A673 (cell line): ENCODE measurements at regions of chr6 and their contacts with region 1.

Region 1: DNA sequence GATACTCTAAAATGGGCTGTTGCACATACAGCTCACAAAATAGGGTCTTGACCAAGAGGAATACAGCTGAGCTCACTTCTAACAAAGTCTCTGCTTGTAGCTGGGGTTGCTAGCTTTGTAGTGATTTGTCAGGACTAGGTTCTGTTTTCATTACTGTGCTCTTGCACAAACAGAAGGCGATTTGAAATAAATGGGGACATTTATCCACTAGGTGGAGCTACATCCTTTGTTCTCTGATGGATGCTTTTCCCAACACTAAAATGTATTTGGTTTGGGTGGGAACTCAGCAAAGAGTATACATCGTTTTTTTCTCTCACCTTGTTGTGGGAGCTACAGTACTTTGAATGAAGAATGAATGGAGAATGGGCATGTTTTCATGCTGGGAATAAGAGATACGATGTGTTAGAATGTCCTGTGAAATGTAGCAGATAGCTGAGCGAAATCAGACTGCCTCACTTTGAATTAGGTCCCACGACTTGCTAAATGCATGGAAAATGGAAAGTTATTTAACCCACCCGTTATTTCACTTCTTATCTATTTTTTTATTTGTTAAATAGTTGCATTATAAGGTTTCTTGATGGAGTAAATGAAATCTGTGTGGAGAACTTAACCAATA is 494.7 kb upstream of the MAP3K7 start:
- DNase-seq: peak; percentile 88
- H3K4me3 ChIP-seq: no peak overlapping the region
- H3K27ac ChIP-seq: peak overlapping the region; percentile 56
- H3K4me1 ChIP-seq: peaks cover 32% of the 10 kb centered on the region
- H3K27me3 ChIP-seq: no peaks in the 10 kb centered on the region
- CTCF ChIP-seq: peak; percentile 77

Region 2: GRCh38 chr6:90610751-90611542 is 470.6 kb before region 1 on chr6:
- CTCF ChIA-PET with region 1: no interaction called
- POLR2A ChIA-PET with region 1: no interaction called
- intact Hi-C with region 1: loop called (anchors 10 kb)
- DNase-seq: peak; percentile 56
- H3K4me3 ChIP-seq: peak overlapping the region; percentile 67
- H3K27ac ChIP-seq: no peak overlapping the region
- H3K4me1 ChIP-seq: peaks cover 10% of the 10 kb centered on the region
- H3K27me3 ChIP-seq: no peaks in the 10 kb centered on the region
- CTCF ChIP-seq: no peak

Region 3: DNA sequence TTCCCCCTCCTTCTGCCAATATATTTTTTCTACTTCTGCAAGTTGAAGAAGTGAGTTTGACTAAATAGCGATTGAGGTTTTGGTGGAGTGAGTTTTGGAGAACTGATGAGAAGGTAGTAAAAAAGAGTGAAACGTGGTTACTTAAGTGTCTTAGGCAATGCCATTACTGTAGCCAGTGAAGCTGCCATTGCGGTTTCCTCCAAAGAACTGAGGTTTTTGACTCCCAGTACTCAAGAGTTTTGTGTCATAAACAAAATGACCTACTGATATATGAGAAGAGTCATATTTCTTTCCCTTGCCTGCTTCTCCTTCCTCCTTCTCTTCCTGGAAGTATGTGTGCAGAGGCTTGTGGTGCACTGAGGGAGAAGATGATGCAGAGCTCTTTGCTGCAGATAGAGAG is 59.8 kb after region 1 on chr6:
- CTCF ChIA-PET with region 1: interaction called, 7 read pairs
- POLR2A ChIA-PET with region 1: no interaction called
- intact Hi-C with region 1: loop called (anchors 2 kb)
- DNase-seq: no peak
- H3K4me3 ChIP-seq: no peak overlapping the region
- H3K27ac ChIP-seq: peak overlapping the region; percentile 48
- H3K4me1 ChIP-seq: peaks cover 61% of the 10 kb centered on the region
- H3K27me3 ChIP-seq: no peaks in the 10 kb centered on the region
- CTCF ChIP-seq: no peak

Region 4: GRCh38 chr6:91276315-91276714 is 194.8 kb after region 1 on chr6:
- CTCF ChIA-PET with region 1: no interaction called
- POLR2A ChIA-PET with region 1: no interaction called
- intact Hi-C with region 1: loop called (anchors 5 kb)
- DNase-seq: peak; percentile 71
- H3K4me3 ChIP-seq: no peak overlapping the region
- H3K27ac ChIP-seq: peak overlapping the region; percentile 10
- H3K4me1 ChIP-seq: peaks cover 48% of the 10 kb centered on the region
- H3K27me3 ChIP-seq: no peaks in the 10 kb centered on the region
- CTCF ChIP-seq: peak; percentile 65

Region 5: GRCh38 chr6:91490672-91491301 is 409.2 kb after region 1 on chr6:
- CTCF ChIA-PET with region 1: no interaction called
- POLR2A ChIA-PET with region 1: interaction called, 3 read pairs
- intact Hi-C with region 1: loop called (anchors 10 kb)
- DNase-seq: peak; percentile 44
- H3K4me3 ChIP-seq: no peak overlapping the region
- H3K27ac ChIP-seq: peak overlapping the region; percentile 13
- H3K4me1 ChIP-seq: peaks cover 4% of the 10 kb centered on the region
- H3K27me3 ChIP-seq: no peaks in the 10 kb centered on the region
- CTCF ChIP-seq: no peak

Region 6: DNA sequence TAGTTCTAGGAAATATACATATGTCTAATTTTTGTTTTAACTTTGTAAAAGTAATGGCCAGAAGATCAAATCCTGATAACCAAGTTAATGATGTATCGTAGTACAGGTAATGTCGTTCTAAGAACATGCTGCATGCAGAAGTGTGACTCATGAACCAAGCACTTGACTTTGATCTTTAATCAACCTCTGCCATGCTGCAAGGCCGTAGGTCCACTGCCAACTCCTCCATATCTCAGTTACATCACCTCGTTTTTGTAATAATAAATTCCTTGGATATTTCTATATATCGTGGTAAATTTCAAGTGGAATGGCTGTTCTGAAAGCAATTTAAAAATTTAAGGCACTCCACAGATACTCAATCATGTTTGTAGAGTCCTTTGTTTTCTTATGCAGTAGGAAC is 1566.1 kb after region 1 on chr6:
- CTCF ChIA-PET with region 1: no interaction called
- POLR2A ChIA-PET with region 1: no interaction called
- intact Hi-C with region 1: loop called (anchors 10 kb)
- DNase-seq: no peak
- H3K4me3 ChIP-seq: no peak overlapping the region
- H3K27ac ChIP-seq: no peak overlapping the region
- H3K4me1 ChIP-seq: no peaks in the 10 kb centered on the region
- H3K27me3 ChIP-seq: no peaks in the 10 kb centered on the region
- CTCF ChIP-seq: no peak